ENCODE measurements at regions of chr3 and their contacts with region 1.

Region 1: DNA sequence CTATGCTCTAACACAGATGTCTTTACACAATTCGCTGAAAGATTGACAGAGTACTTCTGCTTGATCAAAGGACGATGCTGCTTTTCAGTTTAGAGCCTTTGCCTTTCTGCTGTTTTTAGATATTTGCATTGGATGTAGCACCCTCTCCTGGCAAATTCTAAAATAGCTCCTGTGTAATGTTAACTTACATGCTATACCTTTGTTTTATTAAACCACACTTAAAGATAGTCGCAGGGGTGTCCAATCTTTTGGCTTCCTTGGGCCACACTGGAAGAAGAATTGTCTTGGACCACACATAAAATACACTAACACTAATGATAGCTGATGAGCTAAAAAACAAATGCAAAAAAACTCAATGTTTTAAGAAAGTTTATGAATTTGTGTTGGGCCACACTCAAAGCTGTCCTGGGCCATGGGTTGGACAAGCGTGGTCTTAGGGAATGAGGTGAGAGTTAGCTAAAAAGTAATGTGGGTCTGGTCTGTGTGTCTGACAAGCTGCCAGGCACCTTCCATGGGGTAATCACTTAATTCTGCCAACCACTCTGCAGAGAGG is 62.9 kb downstream of the ATG7 start:
- DNase-seq: peak in 1 of 2 donors; percentile 24
- H3K4me3 ChIP-seq: no peak overlapping the region
- CTCF ChIP-seq: peak in 1 of 3 donors; percentile 42
- POLR2A ChIP-seq: no peak

Region 2: DNA sequence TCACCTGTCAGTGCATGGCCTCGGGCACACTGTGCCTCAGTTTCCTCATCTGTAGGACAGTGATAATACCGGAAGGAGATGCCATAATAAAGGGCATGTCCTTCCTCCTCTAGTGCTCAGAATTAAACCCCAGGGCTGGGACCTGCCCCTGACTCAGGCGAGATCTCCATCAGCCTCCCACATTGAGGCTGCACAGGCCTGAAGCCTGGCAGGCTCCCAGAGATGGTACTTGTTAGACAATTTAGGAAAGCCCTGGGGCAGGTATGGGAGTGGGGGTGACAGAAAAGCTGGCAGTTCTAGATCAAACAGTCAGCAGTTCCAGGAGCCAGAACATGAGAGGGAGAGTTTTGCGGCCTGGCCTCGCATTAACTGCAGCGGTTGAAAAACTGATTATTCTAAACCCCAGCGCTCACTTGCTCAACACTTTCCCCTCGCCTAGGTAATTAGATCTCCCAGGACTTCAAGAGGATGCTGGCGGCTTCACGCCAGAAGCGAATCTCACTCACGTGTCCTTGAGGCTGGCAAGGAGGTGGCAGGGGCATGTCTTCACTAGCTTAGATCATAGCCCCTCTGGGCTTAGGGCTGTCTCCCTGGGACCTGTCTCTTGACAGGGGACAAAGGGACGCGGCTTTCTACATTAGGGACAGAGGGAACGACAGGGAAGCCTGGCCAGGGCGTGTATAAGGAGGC is 902.8 kb before region 1 on chr3:
- intact Hi-C with region 1: no loop called
- DNase-seq: no peak
- H3K4me3 ChIP-seq: no peak overlapping the region
- CTCF ChIP-seq: no peak
- POLR2A ChIP-seq: no peak

Region 3: DNA sequence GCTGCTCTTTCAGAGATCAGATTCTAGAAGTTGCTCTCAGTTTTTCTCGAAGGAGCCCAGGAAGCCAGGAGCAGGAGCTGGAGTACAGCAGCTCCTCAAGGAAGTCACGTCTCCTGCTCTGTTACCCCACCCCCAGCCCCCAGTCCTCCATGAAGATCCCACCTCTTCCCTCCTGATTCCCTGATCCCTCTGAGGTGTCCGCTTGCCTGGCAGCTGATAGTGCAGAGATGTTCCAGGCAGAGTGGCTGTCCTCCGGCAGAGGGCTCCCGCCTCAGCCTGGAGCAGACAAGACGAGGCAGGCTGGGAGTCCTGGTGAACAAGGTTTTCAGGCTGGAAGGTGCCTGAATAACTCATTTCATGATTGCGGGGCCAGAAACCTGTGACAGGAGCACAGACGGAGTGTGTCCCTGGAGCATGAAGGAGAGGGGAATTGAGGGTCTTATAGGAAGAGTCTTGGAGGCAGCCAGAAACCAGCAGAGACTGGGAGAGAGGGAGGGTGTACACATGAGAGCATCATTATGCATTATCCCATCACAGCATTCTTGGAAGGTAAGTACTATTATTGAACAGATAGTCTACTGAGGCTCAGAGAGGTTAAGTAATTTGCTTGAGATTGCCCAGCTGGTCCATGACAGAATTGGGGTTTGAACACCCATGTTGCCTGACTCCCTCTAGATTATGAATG is 179.6 kb before region 1 on chr3:
- intact Hi-C with region 1: loop called (anchors 10 kb)
- DNase-seq: peak; percentile 71 to 94
- H3K4me3 ChIP-seq: no peak overlapping the region
- CTCF ChIP-seq: no peak
- POLR2A ChIP-seq: no peak

Region 4: GRCh38 chr3:11236595-11237461 is 98.3 kb before region 1 on chr3:
- intact Hi-C with region 1: loop called (anchors 10 kb)
- DNase-seq: peak; percentile 55 to 89
- H3K4me3 ChIP-seq: no peak overlapping the region
- CTCF ChIP-seq: no peak
- POLR2A ChIP-seq: no peak

Region 5: DNA sequence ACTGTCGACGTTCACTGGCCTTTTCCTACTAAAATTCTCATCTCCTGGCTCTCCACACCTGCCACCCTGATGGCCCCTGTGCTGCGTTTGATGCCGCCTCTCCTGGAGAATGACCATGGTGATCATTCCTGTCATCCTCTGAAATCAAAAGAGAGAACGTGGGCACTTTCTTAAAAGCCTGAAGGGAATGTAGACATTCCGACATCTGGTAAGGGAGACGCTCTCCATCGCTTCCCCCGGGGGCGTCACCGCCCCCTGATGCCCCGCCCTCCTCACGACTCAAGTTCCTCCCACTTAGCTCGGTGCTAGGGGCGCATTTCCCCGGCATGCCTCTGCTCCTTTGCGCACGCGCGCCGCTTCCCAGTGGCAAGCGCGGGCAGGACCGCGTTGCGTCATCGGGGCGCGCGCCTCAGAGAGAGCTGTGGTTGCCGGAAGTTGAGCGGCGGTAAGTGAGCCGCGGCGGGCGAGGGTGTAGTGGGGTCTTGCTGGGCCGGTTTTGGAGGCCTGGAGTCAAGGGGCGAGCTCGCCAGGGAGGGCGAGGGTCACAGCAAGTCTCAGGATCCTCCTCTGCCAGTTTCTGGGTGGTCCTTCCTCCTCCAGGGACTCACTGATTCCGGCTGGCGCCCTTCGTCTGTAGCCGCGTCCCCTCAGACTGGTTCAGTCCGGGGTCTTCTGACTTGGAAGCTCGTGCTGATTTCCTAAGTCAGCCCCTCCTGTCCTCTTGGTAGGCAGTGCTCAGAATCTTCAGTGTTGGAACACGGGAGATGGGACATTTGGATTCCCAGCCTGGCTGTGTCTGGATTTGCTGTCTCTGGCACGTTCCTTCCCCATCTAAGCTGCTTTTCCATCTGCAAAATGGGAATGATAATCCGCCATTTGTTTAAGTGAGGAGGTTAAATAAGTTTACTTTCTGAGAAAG is 62.9 kb before region 1 on chr3 and contains the start of gene ATG7:
- intact Hi-C with region 1: loop called (anchors 10 kb)
- DNase-seq: peak; percentile 95 to 99
- H3K4me3 ChIP-seq: peak within 1 kb of the TSS; percentile 96
- CTCF ChIP-seq: no peak
- POLR2A ChIP-seq: peak in 1 of 2 donors; percentile 38
- total RNA-seq, gene ATG7: 38.8 to 110 (median 53.2) TPM

Measured in lower leg skin (tissue), 4 donors.